ENCODE measurements at regions of chr20 and their contacts with region 1.

Region 1: DNA sequence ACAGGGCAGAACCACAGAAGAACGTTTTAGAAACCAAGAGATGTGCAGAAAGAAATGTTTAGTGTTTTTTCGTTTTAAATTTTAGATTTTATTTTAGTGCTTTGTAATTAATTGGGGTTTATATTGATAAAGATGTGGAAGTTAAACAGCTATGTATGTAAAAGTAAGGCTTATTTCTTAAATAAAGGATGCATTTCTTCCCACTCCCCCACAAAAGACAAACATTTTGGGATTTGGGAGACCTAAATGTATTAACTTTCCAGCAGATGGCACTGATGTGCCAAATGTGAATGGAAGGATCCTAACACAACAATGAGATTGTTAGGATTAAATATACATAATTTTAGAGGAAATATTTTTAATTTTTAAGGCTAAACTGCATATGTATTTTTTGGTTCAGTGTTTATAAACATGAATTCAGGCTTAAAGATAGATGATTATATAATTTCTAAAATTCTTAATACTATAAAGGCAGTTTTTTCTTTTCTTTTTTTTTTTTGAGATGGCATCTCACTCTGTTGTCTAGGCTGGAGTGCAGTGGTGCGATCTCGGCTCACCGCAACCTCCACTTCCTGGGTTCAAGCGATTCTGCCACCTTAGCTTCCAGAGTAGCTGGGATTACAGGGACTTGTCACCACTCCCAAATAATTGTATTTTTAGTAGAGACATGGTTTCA is 12.0 kb downstream of the PFDN4 start:
- DNase-seq: peak in 2 of 5 donors; percentile 47 to 75
- H3K4me3 ChIP-seq: no peak overlapping the region
- H3K27ac ChIP-seq: no peak overlapping the region
- H3K4me1 ChIP-seq: peaks cover 0 to 4% (median 0%) of the 10 kb centered on the region in 3 donors
- H3K27me3 ChIP-seq: no peaks in the 10 kb centered on the region
- CTCF ChIP-seq: peak; percentile 55

Region 2: GRCh38 chr20:54649511-54649962 is 429.6 kb after region 1 on chr20:
- intact Hi-C with region 1: loop called (anchors 10 kb)
- DNase-seq: peak; percentile 81 to 93 (median 87)
- H3K4me3 ChIP-seq: no peak overlapping the region
- H3K27ac ChIP-seq: no peak overlapping the region
- H3K4me1 ChIP-seq: peaks cover 0 to 4% (median 0%) of the 10 kb centered on the region in 3 donors
- H3K27me3 ChIP-seq: no peaks in the 10 kb centered on the region
- CTCF ChIP-seq: peak; percentile 88